ENCODE measurements at regions of chr5 and their contacts with region 1.

Region 1: GRCh38 chr5:76601470-76601869 is 21.7 kb downstream of the F2RL2 start:
- DNase-seq: no peak
- ATAC-seq: peak in 3 of 4 donors; percentile 62 to 78 (median 63)
- H3K4me3 ChIP-seq: no peak overlapping the region
- H3K27ac ChIP-seq: no peak overlapping the region
- H3K4me1 ChIP-seq: no peaks in the 10 kb centered on the region
- H3K27me3 ChIP-seq: no peaks in the 10 kb centered on the region
- CTCF ChIP-seq: peak; percentile 54 to 80 (median 70)
- POLR2A ChIP-seq: no peak

Region 2: GRCh38 chr5:76544268-76544926 is 57.1 kb before region 1 on chr5:
- intact Hi-C with region 1: no loop called
- DNase-seq: no peak
- ATAC-seq: peak in 2 of 4 donors; percentile 33
- H3K4me3 ChIP-seq: no peak overlapping the region
- H3K27ac ChIP-seq: peak overlapping the region in 1 of 12 donors; percentile 83
- H3K4me1 ChIP-seq: peaks cover 0 to 70% (median 0%) of the 10 kb centered on the region in 12 donors
- H3K27me3 ChIP-seq: no peaks in the 10 kb centered on the region
- CTCF ChIP-seq: peak in 6 of 12 donors; percentile 9 to 41 (median 21)
- POLR2A ChIP-seq: no peak

Region 3: DNA sequence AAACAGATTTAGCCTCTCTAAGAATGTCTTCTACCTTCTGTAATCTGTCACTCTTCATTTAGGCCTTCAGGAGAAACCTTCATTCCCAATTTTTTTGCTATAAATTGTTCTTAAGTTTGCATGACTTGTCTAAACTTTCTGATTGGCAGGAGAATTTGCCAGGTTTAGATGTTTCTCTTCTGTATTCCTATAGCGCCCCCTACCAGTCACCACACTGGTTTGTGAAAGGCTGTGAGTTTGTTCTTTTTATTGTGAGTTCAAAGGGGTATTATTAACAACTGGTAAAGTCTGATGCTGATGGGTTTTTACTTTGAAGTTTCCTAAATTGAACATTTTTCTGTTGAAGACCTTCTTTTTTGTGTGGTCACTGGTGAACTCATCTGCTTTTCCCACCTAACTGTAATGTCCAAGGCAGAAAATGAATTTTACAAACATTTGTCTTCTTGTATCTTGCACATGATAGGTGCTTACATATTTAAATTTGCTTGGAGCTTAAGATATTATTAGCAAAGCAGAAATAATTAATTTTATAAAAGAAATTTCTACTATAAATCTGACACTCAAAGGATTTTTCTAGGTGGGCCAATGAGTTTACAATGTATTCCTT is 40.1 kb after region 1 on chr5:
- intact Hi-C with region 1: loop called in 8 of 10 experiments (anchors 1 to 5 kb)
- DNase-seq: peak in 4 of 5 donors; percentile 35 to 68 (median 50)
- ATAC-seq: peak in 1 of 4 donors; percentile 49
- H3K4me3 ChIP-seq: no peak overlapping the region
- H3K27ac ChIP-seq: no peak overlapping the region
- H3K4me1 ChIP-seq: peaks cover 0 to 19% (median 0%) of the 10 kb centered on the region in 12 donors
- H3K27me3 ChIP-seq: no peaks in the 10 kb centered on the region
- CTCF ChIP-seq: peak; percentile 46 to 76 (median 66)
- POLR2A ChIP-seq: no peak

Region 4: GRCh38 chr5:76771705-76772405 is 170.4 kb after region 1 on chr5:
- intact Hi-C with region 1: loop called (anchors 1 to 2 kb)
- DNase-seq: no peak
- ATAC-seq: no peak
- H3K4me3 ChIP-seq: no peak overlapping the region
- H3K27ac ChIP-seq: no peak overlapping the region
- H3K4me1 ChIP-seq: peaks cover 0 to 6% (median 0%) of the 10 kb centered on the region in 12 donors
- H3K27me3 ChIP-seq: no peaks in the 10 kb centered on the region
- CTCF ChIP-seq: no peak
- POLR2A ChIP-seq: no peak

Region 5: GRCh38 chr5:76867827-76868693 is 266.6 kb after region 1 on chr5:
- intact Hi-C with region 1: loop called in 3 of 10 experiments (anchors 5 to 10 kb)
- DNase-seq: peak in 4 of 5 donors; percentile 55 to 63 (median 60)
- ATAC-seq: peak; percentile 64 to 95 (median 90)
- H3K4me3 ChIP-seq: peak overlapping the region in 1 of 12 donors; percentile 20
- H3K27ac ChIP-seq: peak overlapping the region in 3 of 12 donors; percentile 28 to 38 (median 30)
- H3K4me1 ChIP-seq: peaks cover 0 to 7% (median 0%) of the 10 kb centered on the region in 12 donors
- H3K27me3 ChIP-seq: no peaks in the 10 kb centered on the region
- CTCF ChIP-seq: peak; percentile 69 to 90 (median 82)
- POLR2A ChIP-seq: no peak

Region 6: DNA sequence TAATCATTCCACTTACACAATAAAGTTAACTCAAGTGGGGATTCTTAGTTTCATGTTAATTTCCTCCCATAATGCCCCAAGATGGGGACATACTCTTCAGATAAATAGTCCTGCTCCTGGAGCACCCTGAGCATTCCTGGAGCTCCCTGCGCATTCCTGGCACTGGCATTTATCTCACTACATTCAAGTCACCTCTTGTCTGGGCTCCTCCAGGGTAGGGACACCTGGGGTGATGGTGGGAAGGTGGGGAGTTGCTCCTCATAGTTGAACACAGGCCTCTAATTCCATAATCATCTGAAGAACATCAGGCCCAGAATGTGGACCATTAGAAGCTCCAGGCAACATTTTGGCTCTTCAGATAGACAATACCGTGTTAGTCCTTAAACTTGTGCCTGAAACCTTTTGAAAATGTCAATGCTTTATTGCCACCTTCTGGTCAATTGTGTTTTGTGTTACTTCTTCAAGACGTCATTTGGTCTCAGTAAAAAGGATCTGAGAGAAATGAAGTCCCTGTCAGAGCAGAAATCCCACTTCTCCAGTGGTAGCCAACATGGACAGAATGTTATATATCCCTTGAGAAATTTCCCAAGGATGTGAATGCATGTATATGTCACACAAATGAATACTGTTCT is 414.6 kb after region 1 on chr5:
- intact Hi-C with region 1: loop called in 7 of 10 experiments (anchors 5 to 10 kb)
- DNase-seq: no peak
- ATAC-seq: peak in 2 of 4 donors; percentile 37 to 52
- H3K4me3 ChIP-seq: no peak overlapping the region
- H3K27ac ChIP-seq: no peak overlapping the region
- H3K4me1 ChIP-seq: peaks cover 0 to 8% (median 0%) of the 10 kb centered on the region in 12 donors
- H3K27me3 ChIP-seq: no peaks in the 10 kb centered on the region
- CTCF ChIP-seq: peak; percentile 21 to 60 (median 40)
- POLR2A ChIP-seq: no peak

Region 7: GRCh38 chr5:77030097-77031071 is 428.9 kb after region 1 on chr5 and contains the start of gene AGGF1:
- intact Hi-C with region 1: loop called in 1 of 10 experiments (anchors 10 kb)
- DNase-seq: peak; percentile 94 to 97 (median 96)
- ATAC-seq: peak; percentile 100
- H3K4me3 ChIP-seq: peak within 1 kb of the TSS; percentile 82 to 100 (median 94)
- H3K27ac ChIP-seq: peak within 1 kb of the TSS; percentile 77 to 98 (median 90)
- H3K4me1 ChIP-seq: peaks cover 0 to 30% (median 17%) of the 10 kb centered on the region in 12 donors
- H3K27me3 ChIP-seq: no peaks in the 10 kb centered on the region
- CTCF ChIP-seq: no peak
- POLR2A ChIP-seq: peak in 1 of 2 donors; percentile 62
- total RNA-seq, gene AGGF1: 15.5 to 20.1 (median 16.7) TPM

Measured in heart left ventricle (tissue), 16 donors.